ENCODE measurements at regions of chr13 and their contacts with region 1.

Region 1: DNA sequence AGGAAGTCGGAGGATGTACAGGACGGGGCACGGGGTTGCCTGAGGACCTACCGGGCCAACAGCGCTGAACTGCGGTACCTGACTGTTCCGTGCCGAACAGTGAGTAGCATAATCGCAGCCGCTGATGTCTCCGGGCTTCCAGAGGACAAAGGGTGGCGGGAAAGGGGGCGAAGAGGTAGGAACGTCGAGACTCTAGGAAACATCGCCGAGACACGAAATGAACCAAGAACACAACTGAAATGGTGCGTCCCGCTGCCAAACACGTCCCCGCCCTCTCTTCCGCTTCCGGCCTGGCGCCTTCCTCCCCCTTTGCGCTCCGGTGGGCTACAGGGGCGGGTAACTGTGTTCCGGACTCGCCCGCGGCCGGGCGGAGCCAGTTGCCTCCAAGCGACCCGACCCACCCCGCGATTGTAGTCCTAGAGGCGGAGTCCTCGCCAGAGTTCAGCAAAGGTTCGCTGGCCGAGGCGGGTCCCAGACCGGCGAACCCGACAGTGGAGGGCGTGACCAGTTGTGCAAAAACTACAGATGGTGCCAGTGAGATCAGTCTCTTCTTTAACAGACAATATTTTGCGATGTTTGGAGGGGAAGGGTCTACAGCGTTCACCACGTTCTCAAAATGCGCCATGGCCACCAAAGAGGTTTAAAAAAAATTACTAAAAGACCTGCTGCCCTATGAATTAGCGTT is at the start of gene MRPS31:
- DNase-seq: peak; percentile 94 to 99
- H3K4me3 ChIP-seq: peak within 1 kb of the TSS; percentile 85
- CTCF ChIP-seq: peak in 1 of 3 donors; percentile 33
- POLR2A ChIP-seq: no peak
- total RNA-seq, gene MRPS31: 11.0 to 22.5 (median 16.0) TPM

Region 2: DNA sequence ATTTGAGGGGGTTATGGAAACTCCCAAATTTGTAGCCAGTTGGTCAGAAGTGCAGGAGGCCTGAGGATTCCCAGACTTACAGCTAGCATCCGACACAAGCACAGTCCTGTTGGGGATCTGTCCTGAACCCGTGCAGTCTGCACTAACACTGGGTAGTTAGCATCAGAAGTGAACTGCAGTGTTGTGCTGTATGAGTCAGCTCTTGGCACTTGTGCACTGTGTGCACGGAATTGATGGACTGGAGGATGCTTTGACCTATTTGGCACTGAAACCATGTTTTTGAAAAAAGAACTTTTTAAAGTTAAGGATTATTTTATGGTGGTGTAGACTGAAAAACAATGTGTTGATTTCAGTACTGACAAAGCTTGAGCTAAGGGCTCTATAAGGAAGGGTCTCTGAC is 1453.8 kb before region 1 on chr13:
- intact Hi-C with region 1: no loop called
- DNase-seq: peak in 1 of 2 donors; percentile 27
- H3K4me3 ChIP-seq: no peak overlapping the region
- CTCF ChIP-seq: no peak
- POLR2A ChIP-seq: no peak

Region 3: DNA sequence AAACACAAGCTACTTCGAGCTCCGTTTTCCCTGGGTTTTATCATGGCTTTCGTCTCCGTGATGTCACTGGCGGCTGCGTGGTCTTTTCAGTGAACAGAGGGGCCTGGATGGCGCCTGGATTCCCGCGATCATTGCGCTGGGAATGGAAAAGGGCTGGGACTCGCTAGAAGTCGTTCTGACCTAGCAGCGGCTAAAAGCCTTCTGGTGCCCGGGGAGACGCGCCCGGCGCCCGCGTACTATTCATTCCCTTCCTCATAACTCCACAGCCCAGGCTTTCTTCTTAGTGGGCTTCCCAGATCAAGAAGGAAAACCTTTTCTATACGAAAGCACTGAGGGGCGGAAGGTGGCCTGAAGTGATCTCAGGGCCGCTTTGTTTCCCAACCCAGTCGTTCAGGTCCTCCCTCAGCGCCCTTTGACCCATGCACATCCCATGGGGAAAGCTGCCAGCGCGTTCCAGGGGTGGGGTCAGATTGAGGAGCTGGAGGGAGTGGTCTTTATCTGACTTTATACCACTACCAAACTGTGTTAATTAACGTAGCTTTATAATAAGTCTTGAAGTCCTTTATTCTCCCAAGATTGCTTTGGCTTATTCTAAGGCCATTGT is 151.5 kb after region 1 on chr13:
- intact Hi-C with region 1: loop called (anchors 10 kb)
- DNase-seq: no peak
- H3K4me3 ChIP-seq: no peak overlapping the region
- CTCF ChIP-seq: no peak
- POLR2A ChIP-seq: no peak

Region 4: GRCh38 chr13:41145146-41145908 is 374.3 kb after region 1 on chr13:
- intact Hi-C with region 1: no loop called
- DNase-seq: no peak
- H3K4me3 ChIP-seq: no peak overlapping the region
- CTCF ChIP-seq: no peak
- POLR2A ChIP-seq: no peak

Measured in lower leg skin (tissue), 4 donors.